ENCODE measurements at regions of chr16 and their contacts with region 1.

Region 1: GRCh38 chr16:86609115-86609514 is 30.8 kb downstream of the FOXL1 start:
- DNase-seq: no peak
- H3K4me3 ChIP-seq: peak overlapping the region in 1 of 2 donors; percentile 2
- H3K27ac ChIP-seq: peak overlapping the region; percentile 92 to 94
- H3K4me1 ChIP-seq: peaks cover 15 to 48% of the 10 kb centered on the region in 2 donors
- H3K27me3 ChIP-seq: no peaks in the 10 kb centered on the region
- CTCF ChIP-seq: no peak

Region 2: DNA sequence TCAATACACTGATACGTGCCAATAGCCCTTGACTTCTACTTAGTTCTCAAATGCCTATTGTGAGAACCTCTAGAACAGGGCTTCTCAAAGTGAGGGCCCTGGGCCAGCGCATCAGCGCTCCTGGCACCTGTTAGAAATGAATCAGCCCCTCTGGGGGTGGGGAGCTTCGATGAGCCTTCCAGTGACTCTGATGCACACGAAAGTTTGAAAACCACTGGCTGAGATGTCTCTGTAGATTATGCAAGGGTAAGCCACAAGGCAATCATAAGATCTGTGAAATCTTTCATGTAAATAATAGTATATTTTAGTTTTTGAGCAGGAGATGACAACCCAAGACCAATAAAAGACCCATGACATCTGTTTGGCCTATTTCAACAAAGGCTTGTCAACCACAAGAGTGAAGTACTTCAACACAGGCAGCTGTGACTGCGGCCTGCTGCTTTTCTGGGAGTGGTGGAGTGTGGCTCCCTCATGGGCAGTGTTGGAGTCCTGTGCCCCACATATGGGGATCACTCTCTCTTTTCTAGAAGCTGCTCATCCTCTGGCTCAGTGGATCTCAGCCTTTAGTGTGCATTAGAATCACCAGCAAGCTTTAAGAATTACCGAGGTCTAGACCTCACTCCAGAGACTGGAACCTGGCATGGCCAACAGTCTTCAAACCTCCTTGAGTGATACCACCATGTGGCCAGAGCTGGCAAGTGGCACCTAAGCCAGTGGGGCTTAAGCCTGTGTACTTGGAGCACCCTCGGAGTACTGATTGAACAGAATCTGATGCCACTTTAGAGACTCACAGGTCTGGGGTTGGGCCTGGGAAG is 59.8 kb before region 1 on chr16:
- intact Hi-C with region 1: no loop called
- DNase-seq: no peak
- H3K4me3 ChIP-seq: no peak overlapping the region
- H3K27ac ChIP-seq: no peak overlapping the region
- H3K4me1 ChIP-seq: peaks cover 0 to 1% of the 10 kb centered on the region in 2 donors
- H3K27me3 ChIP-seq: no peaks in the 10 kb centered on the region
- CTCF ChIP-seq: no peak

Region 3: DNA sequence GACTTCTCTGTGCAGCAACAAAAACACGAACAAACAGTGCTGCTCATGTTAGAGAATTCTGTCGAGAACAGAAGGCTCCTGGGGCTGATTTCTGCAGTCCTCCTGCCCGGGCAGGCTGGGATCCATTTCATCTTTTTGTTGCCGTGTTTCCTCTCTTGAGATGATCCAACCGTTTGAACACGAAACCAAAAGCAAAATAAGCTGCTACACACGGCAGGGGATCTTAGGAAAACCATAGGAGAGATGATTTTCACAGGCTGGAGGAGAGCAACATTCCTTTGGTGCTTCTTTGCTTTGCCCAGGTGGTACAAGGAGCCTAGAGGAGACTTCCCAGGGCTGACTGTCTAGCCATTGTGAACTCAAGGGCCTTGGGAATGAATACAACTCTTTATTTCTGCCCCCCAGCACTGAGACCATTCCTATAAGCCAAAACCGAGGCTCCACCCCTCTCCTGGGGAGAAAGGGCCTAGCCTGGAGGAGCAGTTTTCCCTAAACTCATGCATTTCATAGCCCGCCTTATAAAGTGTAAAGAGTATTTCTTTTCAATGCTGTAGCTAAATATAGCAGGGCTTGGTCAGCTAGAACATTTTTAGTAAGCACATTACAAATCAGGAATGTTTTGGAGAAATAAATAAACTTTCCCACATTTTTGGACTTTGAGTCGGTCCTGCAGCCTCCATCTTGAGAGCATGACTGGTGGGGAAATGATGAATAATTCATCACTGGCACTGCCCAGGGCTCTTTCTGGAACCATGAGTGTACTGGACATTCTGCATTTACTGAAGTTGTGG is 23.1 kb before region 1 on chr16:
- intact Hi-C with region 1: loop called (anchors 2 kb)
- DNase-seq: peak in 1 of 2 donors; percentile 91
- H3K4me3 ChIP-seq: peak overlapping the region in 1 of 2 donors; percentile 26
- H3K27ac ChIP-seq: peak overlapping the region; percentile 91 to 99
- H3K4me1 ChIP-seq: peaks cover 29 to 85% of the 10 kb centered on the region in 2 donors
- H3K27me3 ChIP-seq: no peaks in the 10 kb centered on the region
- CTCF ChIP-seq: no peak